B cell (primary cell): ENCODE measurements at regions of chr4 and their contacts with region 1.

Region 1: DNA sequence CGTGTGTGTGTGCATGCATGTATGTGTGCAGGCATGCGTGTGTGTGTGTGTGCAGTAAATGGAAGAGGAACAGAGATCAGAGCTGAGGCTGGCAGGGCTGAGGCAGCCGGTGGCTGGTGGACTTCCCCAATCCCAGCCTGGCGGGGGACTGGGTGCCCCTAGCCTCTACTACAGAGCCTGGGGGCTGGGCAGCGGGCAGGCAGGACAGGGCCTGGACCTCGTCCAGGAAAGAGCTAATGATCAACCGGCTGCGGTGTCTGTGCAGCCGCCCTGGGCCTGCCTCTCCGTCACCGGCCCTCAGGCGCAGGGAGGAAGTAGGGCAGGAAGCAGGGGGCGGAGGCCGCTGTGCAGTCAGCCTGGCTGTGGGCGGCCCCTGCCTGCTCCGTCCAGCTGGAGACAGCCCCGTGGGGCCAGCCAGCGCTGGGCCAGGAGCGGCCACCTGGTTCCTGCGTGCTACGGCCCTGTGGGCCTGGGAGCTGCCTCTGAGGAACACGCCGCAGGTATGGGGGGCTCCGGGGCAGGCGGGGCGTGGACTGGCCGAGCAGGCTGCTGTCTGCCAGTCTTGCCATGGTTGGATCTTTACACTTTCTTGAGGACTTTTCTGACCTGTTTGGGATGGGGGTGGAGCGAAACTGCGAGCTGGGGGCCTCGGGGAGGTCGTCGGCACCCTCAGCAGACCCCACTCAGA is at the start of gene SH3TC1:
- DNase-seq: peak; percentile 87
- ATAC-seq: peak; percentile 63
- H3K4me3 ChIP-seq: peak within 1 kb of the TSS; percentile 39 to 96 (median 85)
- H3K4me3 Mint-ChIP-seq: peak within 1 kb of the TSS; percentile 100
- H3K27ac ChIP-seq: peak within 1 kb of the TSS; percentile 80 to 91
- H3K27ac Mint-ChIP-seq: peak within 1 kb of the TSS; percentile 100
- H3K4me1 ChIP-seq: peaks cover 41 to 56% of the 10 kb centered on the region in 2 donors
- H3K4me1 Mint-ChIP-seq: peaks cover 60% of the 10 kb centered on the region
- H3K27me3 ChIP-seq: no peaks in the 10 kb centered on the region
- H3K27me3 Mint-ChIP-seq: no peaks in the 10 kb centered on the region
- CTCF ChIP-seq: no peak
- total RNA-seq, gene SH3TC1: 388 and 396 TPM in 2 replicates

Region 2: DNA sequence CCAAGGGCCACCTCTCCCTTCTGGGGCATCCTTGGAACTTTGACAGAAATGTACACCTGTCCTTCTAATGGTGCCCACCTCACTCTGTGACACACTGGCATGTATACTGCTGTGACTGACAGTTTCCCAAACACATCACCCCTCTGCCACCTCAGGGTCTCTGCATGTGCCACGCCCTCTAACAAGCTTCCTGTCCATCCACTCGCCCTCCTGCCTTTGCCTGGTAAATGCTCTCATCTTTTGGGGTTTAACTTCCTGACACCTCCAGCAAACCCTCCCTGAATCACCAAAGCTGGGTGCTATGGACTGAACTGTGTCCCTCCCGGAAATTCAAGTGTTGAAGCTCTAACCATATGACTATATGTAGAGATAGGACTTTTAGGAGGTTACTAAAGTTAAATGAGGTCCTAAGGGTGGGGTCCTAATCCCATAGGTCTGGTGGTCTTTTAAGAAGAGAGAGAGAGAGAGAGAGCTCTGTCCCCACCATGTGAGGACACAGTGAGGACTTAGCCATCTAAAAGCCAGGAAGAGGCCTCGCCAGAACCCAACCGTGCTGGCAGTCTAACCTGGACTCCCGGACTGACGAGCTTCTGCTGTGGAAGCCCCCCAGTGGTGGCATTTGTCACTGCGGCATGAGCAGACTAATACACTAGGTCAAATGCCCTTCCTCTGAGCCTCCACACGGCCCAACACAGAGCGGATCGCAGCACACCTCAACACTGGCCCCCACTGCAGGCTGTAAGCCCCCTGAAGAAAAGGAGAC is 355.0 kb before region 1 on chr4:
- CTCF ChIA-PET with region 1: no interaction called
- POLR2A ChIA-PET with region 1: no interaction called
- intact Hi-C with region 1: loop called (anchors 10 kb)
- DNase-seq: peak; percentile 27
- ATAC-seq: peak; percentile 39
- H3K4me3 ChIP-seq: no peak overlapping the region
- H3K4me3 Mint-ChIP-seq: no peak overlapping the region
- H3K27ac ChIP-seq: no peak overlapping the region
- H3K27ac Mint-ChIP-seq: no peak overlapping the region
- H3K4me1 ChIP-seq: no peaks in the 10 kb centered on the region
- H3K4me1 Mint-ChIP-seq: no peaks in the 10 kb centered on the region
- H3K27me3 ChIP-seq: no peaks in the 10 kb centered on the region
- H3K27me3 Mint-ChIP-seq: peaks cover 9% of the 10 kb centered on the region
- CTCF ChIP-seq: peak; percentile 65

Region 3: DNA sequence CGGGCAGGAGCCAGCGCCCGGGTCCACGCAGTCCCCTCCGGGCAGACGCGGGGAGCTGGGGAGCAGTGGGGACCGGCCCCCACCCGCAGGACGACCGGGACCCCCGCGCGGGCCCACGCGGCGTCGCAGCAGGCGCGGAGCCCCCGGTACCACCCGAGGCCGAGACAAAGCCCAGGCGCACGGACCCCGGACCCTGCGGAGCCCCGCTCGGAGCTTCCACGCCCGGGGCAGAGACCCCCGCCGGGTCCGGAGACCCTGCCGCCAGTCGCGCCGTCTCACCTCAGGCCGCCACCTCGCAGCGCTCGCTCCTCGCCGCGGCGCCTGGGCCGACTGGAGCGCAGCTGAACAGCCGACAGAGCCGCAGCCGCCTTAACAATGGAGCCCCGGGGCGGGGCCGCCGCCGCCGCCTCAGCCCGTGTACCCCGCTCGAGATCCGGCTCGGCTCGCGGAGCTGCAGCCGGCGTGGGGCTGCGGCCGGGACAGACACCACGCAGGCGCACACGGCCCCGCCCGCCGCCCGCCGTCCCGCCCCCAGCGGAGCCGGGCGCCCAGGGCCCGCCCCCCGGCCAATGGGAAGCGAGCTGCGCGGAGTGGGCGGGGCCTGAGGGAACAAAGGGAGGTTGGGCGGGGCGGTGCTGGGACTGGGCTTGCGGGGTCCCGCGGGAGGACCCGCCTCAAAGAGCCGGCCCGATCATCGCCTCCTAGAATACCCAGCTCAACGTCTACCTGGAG is 259.5 kb before region 1 on chr4 and contains the start of gene AFAP1:
- CTCF ChIA-PET with region 1: interaction called, 3 read pairs
- POLR2A ChIA-PET with region 1: no interaction called
- intact Hi-C with region 1: loop called (anchors 10 kb)
- DNase-seq: peak; percentile 71
- ATAC-seq: peak; percentile 91
- H3K4me3 ChIP-seq: peak within 1 kb of the TSS in 3 of 5 experiments; percentile 35 to 50 (median 45)
- H3K4me3 Mint-ChIP-seq: peak within 1 kb of the TSS; percentile 75
- H3K27ac ChIP-seq: no peak within 1 kb of the TSS
- H3K27ac Mint-ChIP-seq: no peak within 1 kb of the TSS
- H3K4me1 ChIP-seq: peaks cover 10 to 17% of the 10 kb centered on the region in 2 donors
- H3K4me1 Mint-ChIP-seq: peaks cover 8% of the 10 kb centered on the region
- H3K27me3 ChIP-seq: peaks cover 0 to 26% (median 17%) of the 10 kb centered on the region in 4 experiments
- H3K27me3 Mint-ChIP-seq: peaks cover 56% of the 10 kb centered on the region
- CTCF ChIP-seq: no peak
- total RNA-seq, gene AFAP1: 0.44 and 0.49 TPM in 2 replicates

Region 4: DNA sequence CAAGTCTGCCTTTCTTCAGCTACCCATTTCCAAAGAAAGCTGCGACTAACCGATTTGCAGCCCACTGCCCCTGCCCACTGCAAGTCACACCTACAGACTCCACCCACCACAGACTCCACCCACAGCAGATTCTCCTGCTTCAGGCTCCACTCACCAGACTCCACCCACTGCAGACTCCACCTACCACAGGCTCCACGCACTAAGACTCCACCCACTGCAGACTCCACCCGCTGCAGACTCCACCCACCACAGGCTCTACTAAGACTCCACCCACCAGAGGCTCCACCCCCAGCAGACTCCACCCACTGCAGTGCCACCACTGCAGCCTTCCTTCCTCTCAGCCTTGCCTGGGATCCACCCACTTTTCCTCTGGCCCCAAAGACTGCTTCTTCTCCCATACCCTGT is 81.8 kb before region 1 on chr4:
- CTCF ChIA-PET with region 1: no interaction called
- POLR2A ChIA-PET with region 1: no interaction called
- intact Hi-C with region 1: no loop called
- DNase-seq: peak; percentile 40
- ATAC-seq: peak; percentile 82
- H3K4me3 ChIP-seq: no peak overlapping the region
- H3K4me3 Mint-ChIP-seq: no peak overlapping the region
- H3K27ac ChIP-seq: no peak overlapping the region
- H3K27ac Mint-ChIP-seq: no peak overlapping the region
- H3K4me1 ChIP-seq: no peaks in the 10 kb centered on the region
- H3K4me1 Mint-ChIP-seq: peaks cover 9% of the 10 kb centered on the region
- H3K27me3 ChIP-seq: no peaks in the 10 kb centered on the region
- H3K27me3 Mint-ChIP-seq: no peaks in the 10 kb centered on the region
- CTCF ChIP-seq: no peak

Region 5: GRCh38 chr4:8158710-8159536 is 40.1 kb before region 1 on chr4 and contains the start of gene ABLIM2:
- CTCF ChIA-PET with region 1: interaction called, 9 read pairs
- POLR2A ChIA-PET with region 1: interaction called, 41 read pairs
- intact Hi-C with region 1: loop called (anchors 1 kb)
- DNase-seq: peak; percentile 98
- ATAC-seq: peak; percentile 91
- H3K4me3 ChIP-seq: peak within 1 kb of the TSS; percentile 77 to 99 (median 95)
- H3K4me3 Mint-ChIP-seq: peak within 1 kb of the TSS; percentile 94
- H3K27ac ChIP-seq: peak within 1 kb of the TSS; percentile 35 to 41
- H3K27ac Mint-ChIP-seq: peak within 1 kb of the TSS; percentile 87
- H3K4me1 ChIP-seq: peaks cover 44 to 59% of the 10 kb centered on the region in 2 donors
- H3K4me1 Mint-ChIP-seq: peaks cover 44% of the 10 kb centered on the region
- H3K27me3 ChIP-seq: peaks cover 0 to 19% (median 10%) of the 10 kb centered on the region in 4 experiments
- H3K27me3 Mint-ChIP-seq: peaks cover 12% of the 10 kb centered on the region
- CTCF ChIP-seq: no peak
- total RNA-seq, gene ABLIM2: 68.3 and 79.0 TPM in 2 replicates

Region 6: DNA sequence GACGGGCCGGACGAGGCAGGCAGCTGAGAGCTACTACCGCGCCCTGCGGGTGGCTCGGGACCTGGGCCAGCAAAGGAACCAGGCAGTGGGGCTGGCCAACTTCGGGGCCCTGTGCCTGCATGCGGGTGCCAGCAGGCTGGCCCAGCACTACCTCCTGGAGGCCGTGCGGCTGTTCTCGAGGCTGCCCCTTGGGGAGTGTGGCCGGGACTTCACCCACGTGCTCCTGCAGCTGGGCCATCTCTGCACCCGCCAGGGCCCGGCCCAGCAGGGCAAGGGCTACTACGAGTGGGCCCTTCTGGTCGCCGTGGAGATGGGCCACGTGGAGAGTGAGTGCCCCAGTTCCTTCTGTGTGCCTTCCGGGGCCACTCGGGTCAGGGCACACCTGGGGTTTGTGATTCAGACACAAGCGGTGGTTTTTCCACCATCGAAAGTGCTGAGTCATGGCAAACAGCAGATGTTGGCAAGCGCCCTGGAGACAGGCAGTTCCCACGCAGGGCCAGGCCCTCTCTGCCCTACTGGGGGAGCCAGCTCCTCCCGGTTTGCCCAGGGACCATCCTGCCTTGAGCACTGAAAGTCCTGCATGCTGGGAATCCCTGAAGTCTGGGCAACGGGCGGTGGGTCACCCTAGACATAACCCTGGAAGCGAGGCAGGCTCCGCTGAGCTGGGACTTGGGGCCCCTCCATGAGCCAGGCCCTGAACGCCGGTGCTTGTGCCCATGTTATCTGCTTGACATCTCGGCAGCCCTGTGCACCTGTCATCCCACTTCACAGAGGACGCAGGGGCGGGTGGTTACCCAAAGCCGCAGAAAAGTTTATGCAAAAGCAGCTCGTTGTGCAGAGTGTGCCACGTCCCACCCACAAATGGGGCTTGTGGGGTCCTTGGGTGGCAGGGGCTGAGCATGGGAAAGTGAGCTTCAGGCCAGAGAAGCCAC is 29.5 kb after region 1 on chr4:
- CTCF ChIA-PET with region 1: interaction called, 20 read pairs
- POLR2A ChIA-PET with region 1: interaction called, 50 read pairs
- intact Hi-C with region 1: loop called (anchors 2 kb)
- DNase-seq: peak; percentile 75
- ATAC-seq: peak; percentile 73
- H3K4me3 ChIP-seq: peak overlapping the region in 1 of 5 experiments; percentile 14
- H3K4me3 Mint-ChIP-seq: peak overlapping the region; percentile 74
- H3K27ac ChIP-seq: peak overlapping the region; percentile 68 to 73
- H3K27ac Mint-ChIP-seq: peak overlapping the region; percentile 92
- H3K4me1 ChIP-seq: peaks cover 17 to 41% of the 10 kb centered on the region in 2 donors
- H3K4me1 Mint-ChIP-seq: peaks cover 39% of the 10 kb centered on the region
- H3K27me3 ChIP-seq: no peaks in the 10 kb centered on the region
- H3K27me3 Mint-ChIP-seq: no peaks in the 10 kb centered on the region
- CTCF ChIP-seq: no peak